Activated T-helper 2 cell treated with anti-CD3 and anti-CD28 coated beads, Interferon-gamma antibody, Interleukin-2, Interleukin-4, amounts not matched to agents 10 μg/mL and 5 μg/mL and 100 μg/mL, durations not matched to agents 14 hours and 24 hours and 36 hours (primary cell): ENCODE measurements at regions of chr12 and their contacts with region 1.

Region 1: GRCh38 chr12:71636704-71637115 is 26.9 kb downstream of the ZFC3H1 start:
- DNase-seq: no peak
- H3K4me3 Mint-ChIP-seq: no peak overlapping the region
- H3K27ac Mint-ChIP-seq: peak overlapping the region; percentile 73
- H3K4me1 Mint-ChIP-seq: peaks cover 16% of the 10 kb centered on the region
- H3K27me3 Mint-ChIP-seq: no peaks in the 10 kb centered on the region

Region 2: GRCh38 chr12:71415336-71416231 is 221.1 kb before region 1 on chr12:
- intact Hi-C with region 1: loop called (anchors 5 kb)
- DNase-seq: no peak
- H3K4me3 Mint-ChIP-seq: no peak overlapping the region
- H3K27ac Mint-ChIP-seq: no peak overlapping the region
- H3K4me1 Mint-ChIP-seq: no peaks in the 10 kb centered on the region
- H3K27me3 Mint-ChIP-seq: peaks cover 2% of the 10 kb centered on the region

Region 3: GRCh38 chr12:71652656-71653055 is 15.9 kb after region 1 on chr12:
- intact Hi-C with region 1: loop called (anchors 2 kb)
- DNase-seq: no peak
- H3K4me3 Mint-ChIP-seq: no peak overlapping the region
- H3K27ac Mint-ChIP-seq: no peak overlapping the region
- H3K4me1 Mint-ChIP-seq: peaks cover 31% of the 10 kb centered on the region
- H3K27me3 Mint-ChIP-seq: no peaks in the 10 kb centered on the region

Region 4: DNA sequence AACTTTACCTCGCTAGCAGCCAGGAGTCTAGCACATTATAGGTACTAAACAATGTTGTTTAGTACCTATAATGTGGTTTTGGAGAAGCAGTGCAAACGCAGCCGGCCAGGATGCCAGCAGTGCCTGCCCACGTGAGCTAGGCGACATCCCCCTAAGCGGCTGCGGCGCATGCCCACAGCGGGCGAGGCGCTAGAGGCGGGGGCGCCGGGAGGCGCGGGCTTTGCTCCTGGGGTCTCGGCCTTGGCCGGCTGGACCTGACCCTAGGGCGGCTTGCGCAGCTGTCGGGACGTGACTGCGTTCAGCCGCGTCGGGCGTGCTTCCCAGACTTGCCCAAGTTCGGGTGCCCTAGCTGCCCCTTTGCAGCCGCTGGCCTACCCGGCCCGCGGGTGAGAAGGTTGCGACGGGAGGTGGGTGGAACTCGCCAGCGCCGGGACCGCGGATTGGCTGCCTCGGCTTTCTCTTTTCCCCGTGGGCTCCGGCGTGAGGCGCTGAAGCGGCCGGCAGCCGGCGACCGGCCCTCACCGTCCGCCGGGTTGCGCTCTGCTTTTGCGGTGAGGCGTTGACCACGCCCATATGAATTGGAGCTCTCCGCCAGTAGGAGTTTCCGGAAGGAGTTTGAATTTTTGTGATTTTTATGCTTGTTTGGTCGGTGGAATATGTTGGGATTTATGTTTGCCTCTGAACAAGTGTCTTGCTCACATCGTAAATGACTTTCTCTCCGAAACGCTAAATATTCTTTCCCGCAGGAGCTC is 49.4 kb after region 1 on chr12 and contains the start of gene TMEM19:
- intact Hi-C with region 1: loop called (anchors 2 kb)
- DNase-seq: peak; percentile 79
- H3K4me3 Mint-ChIP-seq: peak within 1 kb of the TSS; percentile 90
- H3K27ac Mint-ChIP-seq: peak within 1 kb of the TSS; percentile 95
- H3K4me1 Mint-ChIP-seq: peaks cover 21% of the 10 kb centered on the region
- H3K27me3 Mint-ChIP-seq: no peaks in the 10 kb centered on the region
- total RNA-seq, gene TMEM19: 11.0 and 14.3 TPM in 2 replicates

Region 5: GRCh38 chr12:71746983-71747611 is 110.4 kb after region 1 on chr12:
- intact Hi-C with region 1: loop called (anchors 5 kb)
- DNase-seq: peak; percentile 26
- H3K4me3 Mint-ChIP-seq: no peak overlapping the region
- H3K27ac Mint-ChIP-seq: no peak overlapping the region
- H3K4me1 Mint-ChIP-seq: peaks cover 2% of the 10 kb centered on the region
- H3K27me3 Mint-ChIP-seq: peaks cover 39% of the 10 kb centered on the region